Activated CD4-positive, alpha-beta memory T cell treated with anti-CD3 and anti-CD28 coated beads for 36 hours (primary cell): ENCODE measurements at regions of chr9 and their contacts with region 1.

Region 1: DNA sequence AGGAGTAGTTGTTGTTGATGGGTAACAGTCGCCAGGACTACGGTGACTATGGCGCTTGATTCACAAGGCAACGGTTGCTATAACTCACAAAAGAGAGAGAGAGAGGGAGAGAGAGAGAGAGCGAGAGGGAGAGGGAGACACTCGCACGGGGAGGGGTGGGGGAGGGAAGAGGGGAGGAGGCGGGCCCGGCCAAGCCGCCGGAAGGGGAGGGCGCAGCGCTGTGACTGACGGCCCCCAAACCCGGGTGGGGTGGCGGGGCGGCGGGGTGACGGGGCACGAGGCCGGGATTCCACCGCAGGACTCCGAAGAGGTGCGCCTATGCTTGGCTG is at the start of gene RFX3:
- DNase-seq: peak; percentile 95
- H3K4me3 Mint-ChIP-seq: peak within 1 kb of the TSS; percentile 99
- H3K27ac Mint-ChIP-seq: peak within 1 kb of the TSS; percentile 99
- H3K4me1 Mint-ChIP-seq: peaks cover 42% of the 10 kb centered on the region
- H3K27me3 Mint-ChIP-seq: no peaks in the 10 kb centered on the region
- total RNA-seq, gene RFX3: 12.2 to 13.4 TPM

Region 2: GRCh38 chr9:2014696-2015580 is 1510.9 kb before region 1 on chr9 and contains the start of gene SMARCA2:
- CTCF ChIA-PET with region 1: no interaction called
- POLR2A ChIA-PET with region 1: interaction called, 4 read pairs
- intact Hi-C with region 1: loop called (anchors 2 kb)
- DNase-seq: peak; percentile 98
- H3K4me3 Mint-ChIP-seq: peak within 1 kb of the TSS; percentile 99
- H3K27ac Mint-ChIP-seq: peak within 1 kb of the TSS; percentile 100
- H3K4me1 Mint-ChIP-seq: peaks cover 47% of the 10 kb centered on the region
- H3K27me3 Mint-ChIP-seq: peaks cover 4% of the 10 kb centered on the region
- total RNA-seq, gene SMARCA2: 95.1 to 100 TPM

Region 3: GRCh38 chr9:3161665-3162306 is 364.0 kb before region 1 on chr9:
- CTCF ChIA-PET with region 1: no interaction called
- POLR2A ChIA-PET with region 1: no interaction called
- intact Hi-C with region 1: no loop called
- DNase-seq: no peak
- H3K4me3 Mint-ChIP-seq: no peak overlapping the region
- H3K27ac Mint-ChIP-seq: no peak overlapping the region
- H3K4me1 Mint-ChIP-seq: no peaks in the 10 kb centered on the region
- H3K27me3 Mint-ChIP-seq: peaks cover 7% of the 10 kb centered on the region

Region 4: DNA sequence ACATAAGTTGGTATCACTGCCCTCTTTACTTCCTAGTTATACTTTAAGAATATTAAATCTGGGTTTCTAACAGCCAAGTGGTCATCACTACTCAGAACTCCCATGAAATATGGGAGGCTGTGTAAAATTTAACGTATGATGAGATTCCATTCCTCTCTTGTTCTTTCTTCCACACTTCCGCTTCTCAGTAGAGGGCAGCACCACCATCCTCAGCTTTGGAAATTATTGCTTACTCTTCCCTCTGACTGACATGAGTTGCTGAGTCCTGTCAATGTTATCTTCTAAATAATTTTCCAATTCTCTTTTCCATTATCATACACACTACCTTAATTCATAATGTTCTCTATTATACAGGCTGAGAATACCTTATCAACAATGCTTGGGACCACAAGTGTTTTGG is 194.0 kb before region 1 on chr9:
- CTCF ChIA-PET with region 1: no interaction called
- POLR2A ChIA-PET with region 1: no interaction called
- intact Hi-C with region 1: no loop called
- DNase-seq: peak; percentile 11
- H3K4me3 Mint-ChIP-seq: no peak overlapping the region
- H3K27ac Mint-ChIP-seq: no peak overlapping the region
- H3K4me1 Mint-ChIP-seq: peaks cover under 1% of the 10 kb centered on the region
- H3K27me3 Mint-ChIP-seq: no peaks in the 10 kb centered on the region

Region 5: GRCh38 chr9:3385871-3386270 is 139.9 kb before region 1 on chr9:
- CTCF ChIA-PET with region 1: no interaction called
- POLR2A ChIA-PET with region 1: interaction called, 5 read pairs
- intact Hi-C with region 1: loop called (anchors 1 kb)
- DNase-seq: peak; percentile 65
- H3K4me3 Mint-ChIP-seq: no peak overlapping the region
- H3K27ac Mint-ChIP-seq: no peak overlapping the region
- H3K4me1 Mint-ChIP-seq: peaks cover 29% of the 10 kb centered on the region
- H3K27me3 Mint-ChIP-seq: no peaks in the 10 kb centered on the region

Region 6: DNA sequence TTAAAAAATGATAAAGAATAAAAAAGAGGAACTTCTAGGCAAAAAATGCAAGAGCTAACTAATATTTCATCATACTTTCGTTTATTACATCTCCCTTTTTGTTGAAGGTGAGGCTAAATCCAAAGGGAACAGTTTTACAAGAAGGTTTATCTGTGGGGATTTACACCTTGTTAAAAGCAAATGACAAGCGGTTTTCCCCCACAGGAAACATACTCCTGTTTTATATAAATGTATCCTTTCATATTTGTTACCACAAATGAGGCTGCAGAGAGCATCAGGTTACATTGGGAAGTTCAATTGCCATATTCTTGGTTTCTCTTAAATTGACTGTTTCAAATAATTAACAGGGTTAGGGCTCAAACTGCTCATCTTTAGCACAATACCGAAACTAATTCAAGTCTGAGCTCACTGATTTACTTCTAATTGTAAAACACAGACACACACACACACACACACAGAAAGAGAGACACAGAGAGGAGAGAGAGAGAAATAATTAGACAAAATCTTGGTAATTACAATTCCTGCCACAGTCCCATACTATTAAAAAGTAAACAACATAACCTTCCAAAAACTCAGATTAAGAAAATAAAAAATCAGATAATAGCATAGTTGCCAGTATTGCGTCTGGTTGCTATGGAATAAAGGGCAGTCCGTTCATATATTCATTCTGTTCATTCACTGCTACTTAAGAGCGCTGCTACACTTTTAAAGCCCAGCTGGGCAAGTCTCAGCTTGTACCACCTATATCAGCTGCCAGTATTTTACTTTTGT is 17.1 kb before region 1 on chr9:
- CTCF ChIA-PET with region 1: interaction called, 3 read pairs
- POLR2A ChIA-PET with region 1: interaction called, 11 read pairs
- intact Hi-C with region 1: loop called (anchors 1 kb)
- DNase-seq: no peak
- H3K4me3 Mint-ChIP-seq: peak overlapping the region; percentile 44
- H3K27ac Mint-ChIP-seq: peak overlapping the region; percentile 60
- H3K4me1 Mint-ChIP-seq: peaks cover 52% of the 10 kb centered on the region
- H3K27me3 Mint-ChIP-seq: no peaks in the 10 kb centered on the region

Region 7: DNA sequence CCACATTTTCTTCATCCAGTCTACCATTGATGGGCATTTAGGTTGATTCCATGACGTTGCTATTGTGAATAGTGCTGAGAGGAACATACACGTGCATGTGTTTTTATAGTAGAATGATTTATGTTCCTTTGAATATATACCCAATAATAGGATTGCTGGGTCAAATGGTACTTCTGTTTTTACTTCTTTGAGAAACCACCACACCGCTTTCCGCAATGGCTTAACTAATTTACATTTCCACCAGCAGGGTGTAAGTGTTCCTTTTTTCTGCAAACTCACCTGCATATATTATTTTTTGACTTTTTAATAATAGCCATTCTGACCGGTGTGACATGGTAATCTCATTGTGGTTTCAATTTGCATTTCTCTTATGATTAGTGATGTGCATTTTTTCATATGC is 82.2 kb after region 1 on chr9:
- CTCF ChIA-PET with region 1: no interaction called
- POLR2A ChIA-PET with region 1: no interaction called
- intact Hi-C with region 1: no loop called
- DNase-seq: no peak
- H3K4me3 Mint-ChIP-seq: no peak overlapping the region
- H3K27ac Mint-ChIP-seq: no peak overlapping the region
- H3K4me1 Mint-ChIP-seq: no peaks in the 10 kb centered on the region
- H3K27me3 Mint-ChIP-seq: no peaks in the 10 kb centered on the region

Region 8: GRCh38 chr9:3732077-3733038 is 206.6 kb after region 1 on chr9:
- CTCF ChIA-PET with region 1: no interaction called
- POLR2A ChIA-PET with region 1: interaction called, 3 read pairs
- intact Hi-C with region 1: loop called (anchors 1 kb)
- DNase-seq: peak; percentile 24
- H3K4me3 Mint-ChIP-seq: peak overlapping the region; percentile 5
- H3K27ac Mint-ChIP-seq: no peak overlapping the region
- H3K4me1 Mint-ChIP-seq: peaks cover 22% of the 10 kb centered on the region
- H3K27me3 Mint-ChIP-seq: no peaks in the 10 kb centered on the region

Region 9: GRCh38 chr9:4297151-4297785 is 771.5 kb after region 1 on chr9:
- CTCF ChIA-PET with region 1: no interaction called
- POLR2A ChIA-PET with region 1: no interaction called
- intact Hi-C with region 1: loop called (anchors 2 kb)
- DNase-seq: peak; percentile 66
- H3K4me3 Mint-ChIP-seq: peak overlapping the region; percentile 89
- H3K27ac Mint-ChIP-seq: peak overlapping the region; percentile 59
- H3K4me1 Mint-ChIP-seq: peaks cover 27% of the 10 kb centered on the region
- H3K27me3 Mint-ChIP-seq: peaks cover 37% of the 10 kb centered on the region

Region 10: GRCh38 chr9:4939118-4939561 is 1413.3 kb after region 1 on chr9:
- CTCF ChIA-PET with region 1: no interaction called
- POLR2A ChIA-PET with region 1: no interaction called
- intact Hi-C with region 1: loop called (anchors 5 kb)
- DNase-seq: peak; percentile 25
- H3K4me3 Mint-ChIP-seq: no peak overlapping the region
- H3K27ac Mint-ChIP-seq: peak overlapping the region; percentile 91
- H3K4me1 Mint-ChIP-seq: peaks cover 74% of the 10 kb centered on the region
- H3K27me3 Mint-ChIP-seq: no peaks in the 10 kb centered on the region